ENCODE measurements at regions of chr4 and their contacts with region 1.

Region 1: DNA sequence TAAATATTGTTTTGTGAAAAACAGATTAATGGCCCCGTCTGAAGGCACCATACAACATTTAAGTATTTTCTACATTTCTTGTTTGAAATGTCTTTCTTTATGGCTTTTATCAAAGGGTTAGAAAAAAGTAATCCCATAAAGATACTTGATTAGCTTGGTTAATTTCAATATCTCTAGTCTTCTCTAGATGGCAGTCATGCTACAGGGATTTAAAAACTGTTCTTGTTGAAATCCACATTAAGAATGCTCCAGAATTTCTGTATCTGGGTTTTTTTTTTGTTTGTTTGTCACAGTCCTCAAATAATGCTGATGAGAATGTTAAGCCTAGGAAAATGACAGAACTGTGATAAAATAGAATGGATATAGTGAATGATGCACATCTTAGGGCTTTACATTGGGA is 109.0 kb upstream of the AADAT start:
- DNase-seq: no peak
- H3K4me3 ChIP-seq: no peak overlapping the region
- H3K27ac ChIP-seq: no peak overlapping the region
- H3K4me1 ChIP-seq: no peaks in the 10 kb centered on the region
- H3K27me3 ChIP-seq: no peaks in the 10 kb centered on the region
- CTCF ChIP-seq: no peak; a peak in 1 of 4 replicates
- EP300 ChIP-seq: no peak
- POLR2A ChIP-seq: no peak
- RAD21 ChIP-seq: peak in 1 of 2 experiments; percentile 49

Region 2: DNA sequence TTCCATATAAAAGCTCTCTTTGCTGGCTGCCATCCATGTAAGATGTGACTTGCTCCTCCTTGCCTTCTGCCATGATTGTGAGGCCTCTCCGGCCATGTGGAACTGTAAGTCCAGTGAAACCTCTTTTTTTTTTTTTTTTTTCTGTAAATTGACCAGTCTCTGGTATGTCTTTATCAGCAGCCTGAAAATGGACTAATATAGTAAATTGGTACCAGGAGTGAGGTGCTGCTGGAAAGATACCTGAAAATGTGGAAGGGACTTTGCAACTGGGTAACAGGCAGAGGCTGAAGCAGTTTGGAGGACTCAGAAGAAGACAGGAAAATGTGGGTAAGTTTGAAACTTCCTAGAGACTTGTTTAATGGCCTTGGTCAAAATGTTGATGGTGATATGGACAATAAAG is 15.4 kb after region 1 on chr4:
- CTCF ChIA-PET with region 1: interaction called, 10 read pairs
- POLR2A ChIA-PET with region 1: no interaction called
- DNase-seq: no peak
- H3K4me3 ChIP-seq: no peak overlapping the region
- H3K27ac ChIP-seq: no peak overlapping the region
- H3K4me1 ChIP-seq: no peaks in the 10 kb centered on the region
- H3K27me3 ChIP-seq: no peaks in the 10 kb centered on the region
- CTCF ChIP-seq: no peak
- EP300 ChIP-seq: no peak
- POLR2A ChIP-seq: no peak
- RAD21 ChIP-seq: no peak